Panc1 (cell line): ENCODE measurements at regions of chr2 and their contacts with region 1.

Region 1: GRCh38 chr2:43131024-43131889 is 95.1 kb downstream of the ZFP36L2 start:
- DNase-seq: peak; percentile 24
- ATAC-seq: peak; percentile 86
- H3K4me3 ChIP-seq: no peak overlapping the region
- H3K27ac ChIP-seq: peak overlapping the region; percentile 75
- H3K4me1 ChIP-seq: peaks cover 20% of the 10 kb centered on the region
- H3K27me3 ChIP-seq: no peaks in the 10 kb centered on the region
- CTCF ChIP-seq: no peak; the same call in 1 of the 2 replicates

Region 2: DNA sequence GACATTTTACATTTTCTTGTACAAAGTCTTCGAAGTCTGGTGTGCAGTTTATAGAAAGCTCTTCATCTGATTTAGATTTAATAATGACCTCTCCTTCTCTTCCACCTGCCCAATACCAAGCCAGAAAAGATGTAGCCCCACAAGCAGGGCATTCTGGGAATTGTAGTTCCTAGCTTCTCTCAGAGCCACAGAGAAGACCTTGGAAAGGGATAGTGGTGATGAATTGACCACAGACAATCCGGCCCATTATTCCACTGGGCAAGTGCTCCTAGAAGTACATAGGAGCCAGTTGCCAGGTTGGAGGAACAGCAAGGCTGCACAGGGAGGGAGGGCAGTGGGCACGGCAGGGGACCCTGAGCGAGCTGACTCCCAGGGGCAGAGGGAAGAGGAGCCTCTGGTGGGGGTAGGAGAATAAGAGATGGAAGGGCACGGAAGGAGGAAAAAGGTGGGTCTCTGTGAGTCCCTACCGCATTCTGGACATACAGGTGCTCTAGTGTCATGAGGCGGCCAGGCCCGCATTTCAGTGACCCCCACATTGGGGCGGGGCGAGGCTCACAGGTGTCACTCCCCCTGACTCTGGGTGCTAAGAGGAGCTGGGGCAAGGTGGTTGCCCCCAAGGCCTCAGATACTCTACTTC is 186.4 kb before region 1 on chr2:
- CTCF ChIA-PET with region 1: interaction called, 11 read pairs
- POLR2A ChIA-PET with region 1: no interaction called
- in situ Hi-C with region 1: no loop called
- intact Hi-C with region 1: no loop called
- DNase-seq: no peak
- ATAC-seq: peak; percentile 69; the same call in 1 of the 2 replicates
- H3K4me3 ChIP-seq: no peak overlapping the region
- H3K27ac ChIP-seq: no peak overlapping the region
- H3K4me1 ChIP-seq: no peaks in the 10 kb centered on the region
- H3K27me3 ChIP-seq: no peaks in the 10 kb centered on the region
- CTCF ChIP-seq: no peak

Region 3: DNA sequence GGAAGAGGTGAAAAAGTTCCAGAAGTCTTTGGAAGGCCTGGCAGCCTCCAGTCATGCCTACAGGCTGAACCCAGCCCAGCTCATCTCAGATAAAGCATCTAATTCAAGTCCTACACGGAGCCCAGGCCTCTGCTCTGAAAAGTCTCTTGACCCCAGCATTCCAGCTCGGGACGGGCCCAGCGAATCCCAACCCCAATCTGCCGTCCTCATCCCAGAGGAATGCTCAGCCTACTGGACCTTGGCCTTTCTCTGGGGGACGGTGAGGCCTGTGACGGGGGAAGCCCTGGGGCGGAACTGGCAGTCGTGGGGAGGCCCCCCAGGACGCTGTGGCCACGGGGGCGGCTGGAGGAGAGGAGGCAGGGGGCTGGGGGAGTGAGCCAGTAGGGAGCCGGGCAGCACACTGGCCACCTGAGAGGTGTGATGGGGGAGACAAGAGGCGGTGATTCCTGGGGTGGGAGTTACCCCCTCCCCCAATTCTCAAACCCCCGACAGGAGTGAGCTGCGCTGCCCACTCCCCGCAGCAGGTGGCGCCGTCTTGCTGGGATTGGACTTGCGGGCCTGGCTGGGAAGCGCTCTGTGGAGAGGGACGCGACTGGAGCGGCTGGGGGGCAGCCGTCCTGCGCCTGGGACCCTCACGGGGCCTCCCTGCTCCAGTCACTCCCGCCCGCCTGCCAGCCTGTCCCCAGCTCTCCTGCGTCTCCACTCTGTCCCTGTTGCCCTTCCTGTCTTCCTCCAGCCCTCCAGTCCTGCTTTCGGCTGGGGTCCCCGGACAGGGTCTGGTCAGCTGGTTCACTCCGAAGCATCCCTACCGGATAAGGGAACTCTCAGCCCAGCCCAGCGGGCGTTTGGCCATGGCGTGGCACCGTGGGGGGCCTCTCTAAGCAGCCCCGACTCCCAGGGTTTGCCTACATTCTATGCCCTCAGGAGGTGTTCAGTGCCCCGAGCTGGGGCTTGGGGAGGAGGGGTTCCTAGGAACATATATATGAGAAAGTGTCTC is 156.2 kb before region 1 on chr2:
- CTCF ChIA-PET with region 1: interaction called, 3 read pairs
- POLR2A ChIA-PET with region 1: no interaction called
- in situ Hi-C with region 1: no loop called
- intact Hi-C with region 1: loop called (anchors 10 kb)
- DNase-seq: peak; percentile 10
- ATAC-seq: peak; percentile 85
- H3K4me3 ChIP-seq: peak overlapping the region; percentile 12 to 36
- H3K27ac ChIP-seq: peak overlapping the region; percentile 55; the same call in 1 of the 2 replicates
- H3K4me1 ChIP-seq: peaks cover 3% of the 10 kb centered on the region; the same call in 1 of the 2 replicates
- H3K27me3 ChIP-seq: no peaks in the 10 kb centered on the region
- CTCF ChIP-seq: peak; percentile 95

Region 4: DNA sequence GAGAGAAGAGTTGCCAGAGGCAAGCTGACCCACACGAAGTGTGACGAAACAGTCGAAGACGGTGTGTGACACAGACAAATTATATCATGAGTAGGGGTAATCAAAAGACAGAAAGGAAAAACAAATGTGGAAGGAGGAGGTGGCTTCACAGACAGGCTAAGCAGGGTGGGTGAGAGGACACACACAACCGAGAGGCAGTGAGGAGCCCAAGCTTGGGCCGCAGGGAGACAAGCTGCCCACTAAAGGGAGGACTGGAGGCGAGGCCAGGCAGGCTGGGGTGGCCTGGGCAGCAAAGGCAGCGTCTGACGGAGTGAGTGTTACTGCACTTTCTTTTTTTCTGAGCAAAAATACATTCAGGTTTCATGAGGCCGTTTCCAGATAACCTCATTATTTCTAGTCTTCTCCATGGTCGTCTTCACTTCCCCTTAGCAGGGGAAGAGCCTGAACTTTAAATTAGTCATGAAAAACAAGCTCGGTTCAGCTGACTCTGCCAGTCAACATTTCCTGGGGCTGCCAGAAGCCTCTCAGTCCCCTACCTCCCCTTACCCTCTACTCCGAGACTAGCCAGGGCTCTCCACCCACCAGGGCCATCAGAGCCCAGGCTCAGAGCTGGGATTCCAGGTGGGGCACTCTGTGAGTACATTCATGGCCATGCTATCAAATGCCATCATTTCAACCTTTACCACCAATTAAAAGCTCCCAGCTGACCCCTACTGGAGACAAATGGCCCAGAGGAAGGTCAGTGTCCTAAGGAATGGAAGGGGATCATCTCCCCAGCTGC is 108.9 kb after region 1 on chr2:
- CTCF ChIA-PET with region 1: no interaction called
- POLR2A ChIA-PET with region 1: no interaction called
- in situ Hi-C with region 1: no loop called
- intact Hi-C with region 1: no loop called
- DNase-seq: no peak
- ATAC-seq: no peak
- H3K4me3 ChIP-seq: no peak overlapping the region
- H3K27ac ChIP-seq: no peak overlapping the region
- H3K4me1 ChIP-seq: no peaks in the 10 kb centered on the region
- H3K27me3 ChIP-seq: no peaks in the 10 kb centered on the region
- CTCF ChIP-seq: no peak

Region 5: GRCh38 chr2:43251171-43251731 is 120.0 kb after region 1 on chr2:
- CTCF ChIA-PET with region 1: no interaction called
- POLR2A ChIA-PET with region 1: no interaction called
- in situ Hi-C with region 1: no loop called
- intact Hi-C with region 1: no loop called
- DNase-seq: no peak
- ATAC-seq: no peak
- H3K4me3 ChIP-seq: no peak overlapping the region
- H3K27ac ChIP-seq: no peak overlapping the region
- H3K4me1 ChIP-seq: no peaks in the 10 kb centered on the region
- H3K27me3 ChIP-seq: no peaks in the 10 kb centered on the region
- CTCF ChIP-seq: no peak

Region 6: GRCh38 chr2:43484323-43484930 is 353.2 kb after region 1 on chr2:
- CTCF ChIA-PET with region 1: interaction called, 3 read pairs
- POLR2A ChIA-PET with region 1: no interaction called
- in situ Hi-C with region 1: no loop called
- intact Hi-C with region 1: loop called (anchors 10 kb)
- DNase-seq: peak; percentile 64
- ATAC-seq: peak; percentile 76; the same call in 1 of the 2 replicates
- H3K4me3 ChIP-seq: no peak overlapping the region
- H3K27ac ChIP-seq: no peak overlapping the region
- H3K4me1 ChIP-seq: no peaks in the 10 kb centered on the region; the same call in 1 of the 2 replicates
- H3K27me3 ChIP-seq: no peaks in the 10 kb centered on the region
- CTCF ChIP-seq: peak; percentile 62; the same call in 1 of the 2 replicates